Activated CD4-positive, alpha-beta memory T cell treated with anti-CD3 and anti-CD28 coated beads, Interleukin-2, amount 10 ng/mL, durations not matched to agents 7 days and 5 days (primary cell): ENCODE measurements at regions of chr11 and their contacts with region 1.

Region 1: DNA sequence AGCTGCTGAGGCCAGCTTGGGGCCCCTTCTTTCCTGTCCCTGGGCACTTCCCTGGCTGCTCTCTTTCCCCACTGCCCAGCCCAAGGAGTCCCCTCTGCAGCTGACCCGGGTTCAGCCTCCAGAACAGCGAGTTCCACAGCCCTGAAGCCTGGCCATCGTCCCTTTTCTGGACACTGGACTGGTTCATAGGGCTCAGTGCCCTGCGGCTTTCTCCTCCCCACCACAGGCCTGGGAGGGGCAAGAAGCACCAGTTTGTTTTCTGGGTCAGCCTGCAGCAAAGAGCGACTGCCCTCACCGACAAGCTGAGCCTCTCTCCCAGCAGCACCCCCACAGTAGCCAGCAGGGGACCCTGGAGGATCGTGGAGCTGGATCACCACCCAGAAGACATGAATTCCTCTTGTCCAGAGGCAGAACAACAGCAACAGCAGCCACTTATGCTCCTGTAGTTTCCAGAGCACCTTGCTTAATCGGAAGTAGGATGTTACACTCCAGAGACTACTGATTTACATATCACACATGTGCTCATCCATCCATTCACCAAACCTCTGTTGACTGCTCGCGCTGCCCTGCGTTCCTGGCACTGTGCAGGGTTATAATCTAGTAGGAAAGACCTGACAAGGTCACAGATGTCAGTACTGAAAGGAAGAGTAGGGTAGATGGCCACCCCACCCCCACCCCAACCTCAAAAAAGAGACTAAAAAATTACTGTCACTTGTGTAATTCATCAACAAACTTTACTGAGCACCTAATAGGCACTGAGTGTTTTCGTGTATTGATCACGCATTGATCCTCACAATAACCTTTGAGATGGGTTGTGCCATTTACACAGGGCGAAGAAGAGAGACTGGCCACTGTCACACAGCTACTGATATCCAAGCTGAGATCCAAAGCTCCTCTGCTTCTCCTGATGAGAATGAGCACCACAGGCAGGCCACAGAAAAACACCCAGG is 13.0 kb upstream of the CXCR5 start:
- DNase-seq: peak; percentile 42
- H3K4me3 Mint-ChIP-seq: peak overlapping the region; percentile 68
- H3K27ac Mint-ChIP-seq: peak overlapping the region; percentile 97
- H3K4me1 Mint-ChIP-seq: peaks cover 55% of the 10 kb centered on the region
- H3K27me3 Mint-ChIP-seq: no peaks in the 10 kb centered on the region

Region 2: GRCh38 chr11:118845369-118845768 is 25.3 kb before region 1 on chr11:
- CTCF ChIA-PET with region 1: interaction called, 3 read pairs
- POLR2A ChIA-PET with region 1: interaction called, 11 read pairs
- DNase-seq: no peak
- H3K4me3 Mint-ChIP-seq: no peak overlapping the region
- H3K27ac Mint-ChIP-seq: peak overlapping the region; percentile 65
- H3K4me1 Mint-ChIP-seq: peaks cover 30% of the 10 kb centered on the region
- H3K27me3 Mint-ChIP-seq: peaks cover 4% of the 10 kb centered on the region

Region 3: DNA sequence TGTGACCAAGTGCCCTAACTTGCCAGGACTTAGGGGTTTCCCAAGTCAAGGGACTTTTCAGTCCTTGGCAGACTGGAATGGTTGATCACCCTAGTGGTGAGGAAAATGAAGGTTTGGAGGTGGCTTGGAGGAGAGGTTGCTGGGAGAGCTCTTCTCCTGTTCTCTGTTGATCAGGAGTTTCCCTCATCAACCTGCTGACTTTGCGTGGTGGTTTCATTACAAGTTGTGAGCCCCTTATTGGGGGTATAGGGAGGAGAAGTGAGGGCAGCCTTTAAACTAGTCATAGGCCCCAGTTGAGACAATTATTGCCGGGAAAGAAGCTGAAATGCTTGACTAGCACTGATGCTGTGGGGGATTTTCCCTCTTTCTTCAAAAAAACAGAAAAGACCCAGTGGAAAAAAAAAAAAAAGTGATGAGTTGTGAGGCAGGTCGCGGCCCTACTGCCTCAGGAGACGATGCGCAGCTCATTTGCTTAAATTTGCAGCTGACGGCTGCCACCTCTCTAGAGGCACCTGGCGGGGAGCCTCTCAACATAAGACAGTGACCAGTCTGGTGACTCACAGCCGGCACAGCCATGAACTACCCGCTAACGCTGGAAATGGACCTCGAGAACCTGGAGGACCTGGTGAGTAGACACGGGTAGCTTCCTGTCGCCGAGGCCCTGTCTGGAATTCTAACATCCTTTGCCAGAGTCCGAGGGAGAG is 12.8 kb after region 1 on chr11 and contains the start of gene CXCR5:
- CTCF ChIA-PET with region 1: interaction called, 16 read pairs
- POLR2A ChIA-PET with region 1: interaction called, 22 read pairs
- DNase-seq: no peak
- H3K4me3 Mint-ChIP-seq: peak within 1 kb of the TSS; percentile 53
- H3K27ac Mint-ChIP-seq: peak within 1 kb of the TSS; percentile 16
- H3K4me1 Mint-ChIP-seq: peaks cover 55% of the 10 kb centered on the region
- H3K27me3 Mint-ChIP-seq: peaks cover 16% of the 10 kb centered on the region
- total RNA-seq, gene CXCR5: 0.83 to 0.86 TPM

Region 4: GRCh38 chr11:118895142-118896039 is 24.7 kb after region 1 on chr11:
- CTCF ChIA-PET with region 1: interaction called, 16 read pairs
- POLR2A ChIA-PET with region 1: interaction called, 36 read pairs
- DNase-seq: peak; percentile 70
- H3K4me3 Mint-ChIP-seq: peak overlapping the region; percentile 3
- H3K27ac Mint-ChIP-seq: peak overlapping the region; percentile 40
- H3K4me1 Mint-ChIP-seq: peaks cover 55% of the 10 kb centered on the region
- H3K27me3 Mint-ChIP-seq: no peaks in the 10 kb centered on the region

Region 5: GRCh38 chr11:118914178-118914918 is 43.7 kb after region 1 on chr11:
- CTCF ChIA-PET with region 1: interaction called, 5 read pairs
- POLR2A ChIA-PET with region 1: interaction called, 13 read pairs
- DNase-seq: peak; percentile 84
- H3K4me3 Mint-ChIP-seq: peak overlapping the region; percentile 71
- H3K27ac Mint-ChIP-seq: peak overlapping the region; percentile 92
- H3K4me1 Mint-ChIP-seq: peaks cover 88% of the 10 kb centered on the region
- H3K27me3 Mint-ChIP-seq: no peaks in the 10 kb centered on the region

Region 6: GRCh38 chr11:119011483-119012053 is 140.9 kb after region 1 on chr11:
- CTCF ChIA-PET with region 1: no interaction called
- POLR2A ChIA-PET with region 1: no interaction called
- DNase-seq: no peak
- H3K4me3 Mint-ChIP-seq: no peak overlapping the region
- H3K27ac Mint-ChIP-seq: no peak overlapping the region
- H3K4me1 Mint-ChIP-seq: peaks cover 31% of the 10 kb centered on the region
- H3K27me3 Mint-ChIP-seq: no peaks in the 10 kb centered on the region

Region 7: GRCh38 chr11:119056421-119056999 is 185.8 kb after region 1 on chr11:
- CTCF ChIA-PET with region 1: no interaction called
- POLR2A ChIA-PET with region 1: no interaction called
- DNase-seq: peak; percentile 52
- H3K4me3 Mint-ChIP-seq: peak overlapping the region; percentile 95
- H3K27ac Mint-ChIP-seq: peak overlapping the region; percentile 91
- H3K4me1 Mint-ChIP-seq: peaks cover 56% of the 10 kb centered on the region
- H3K27me3 Mint-ChIP-seq: no peaks in the 10 kb centered on the region

Region 8: DNA sequence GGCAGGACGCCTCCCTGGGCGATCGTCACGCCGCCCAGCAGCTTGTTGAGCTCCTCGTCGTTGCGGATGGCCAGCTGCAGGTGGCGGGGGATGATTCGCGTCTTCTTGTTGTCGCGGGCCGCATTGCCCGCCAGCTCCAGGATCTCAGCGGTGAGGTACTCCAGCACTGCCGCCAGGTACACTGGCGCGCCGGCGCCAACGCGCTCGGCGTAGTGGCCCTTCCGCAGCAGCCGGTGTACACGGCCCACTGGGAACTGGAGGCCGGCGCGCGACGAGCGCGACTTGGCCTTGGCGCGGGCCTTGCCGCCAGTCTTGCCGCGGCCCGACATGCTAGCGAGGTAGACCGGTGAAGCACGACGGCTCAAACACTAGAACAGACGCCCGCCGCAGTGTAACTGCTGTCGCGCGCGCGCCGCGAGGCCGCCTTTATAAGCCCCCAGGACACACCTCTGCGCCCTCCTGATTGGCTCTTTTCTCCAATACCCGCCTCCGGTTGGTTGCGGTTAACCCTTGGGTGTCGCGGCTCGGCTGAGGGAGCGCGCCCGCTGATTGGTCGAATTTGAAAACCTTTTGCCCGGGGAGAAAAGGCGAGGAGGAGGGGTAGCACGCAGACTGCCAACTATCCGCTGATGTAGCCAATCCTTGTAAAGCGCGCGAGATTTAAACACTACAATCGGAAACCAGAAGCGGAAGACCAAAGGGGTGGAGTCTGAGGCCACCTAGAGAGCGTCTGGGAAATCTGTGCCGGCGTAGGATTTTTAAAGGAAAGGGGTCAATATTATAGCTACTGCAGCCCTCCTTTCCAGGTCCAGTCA is 224.6 kb after region 1 on chr11:
- CTCF ChIA-PET with region 1: no interaction called
- POLR2A ChIA-PET with region 1: no interaction called
- DNase-seq: peak; percentile 100
- H3K4me3 Mint-ChIP-seq: peak overlapping the region; percentile 93
- H3K27ac Mint-ChIP-seq: peak overlapping the region; percentile 86
- H3K4me1 Mint-ChIP-seq: peaks cover 70% of the 10 kb centered on the region
- H3K27me3 Mint-ChIP-seq: no peaks in the 10 kb centered on the region